ENCODE measurements at regions of chr20 and their contacts with region 1.

Region 1: GRCh38 chr20:52071136-52071535 is 120.4 kb downstream of the ZFP64 start:
- DNase-seq: no peak
- H3K4me3 ChIP-seq: no peak overlapping the region
- H3K27ac ChIP-seq: no peak overlapping the region
- H3K4me1 ChIP-seq: no peaks in the 10 kb centered on the region
- H3K27me3 ChIP-seq: no peaks in the 10 kb centered on the region
- CTCF ChIP-seq: no peak
- POLR2A ChIP-seq: no peak

Region 2: GRCh38 chr20:51608061-51608460 is 463.1 kb before region 1 on chr20:
- intact Hi-C with region 1: loop called (anchors 5 kb)
- DNase-seq: no peak
- H3K4me3 ChIP-seq: no peak overlapping the region
- H3K27ac ChIP-seq: no peak overlapping the region
- H3K4me1 ChIP-seq: no peaks in the 10 kb centered on the region
- H3K27me3 ChIP-seq: no peaks in the 10 kb centered on the region
- CTCF ChIP-seq: no peak
- POLR2A ChIP-seq: no peak

Region 3: GRCh38 chr20:51800060-51800794 is 270.9 kb before region 1 on chr20:
- intact Hi-C with region 1: no loop called
- DNase-seq: no peak
- H3K4me3 ChIP-seq: peak overlapping the region; percentile 25 to 66 (median 45)
- H3K27ac ChIP-seq: no peak overlapping the region
- H3K4me1 ChIP-seq: peaks cover 11 to 28% (median 17%) of the 10 kb centered on the region in 3 donors
- H3K27me3 ChIP-seq: peaks cover 0 to 67% (median 6%) of the 10 kb centered on the region in 4 donors
- CTCF ChIP-seq: peak; percentile 16 to 86 (median 66)
- POLR2A ChIP-seq: no peak

Region 4: GRCh38 chr20:52383995-52384621 is 313.0 kb after region 1 on chr20:
- intact Hi-C with region 1: no loop called
- DNase-seq: no peak
- H3K4me3 ChIP-seq: no peak overlapping the region
- H3K27ac ChIP-seq: no peak overlapping the region
- H3K4me1 ChIP-seq: no peaks in the 10 kb centered on the region
- H3K27me3 ChIP-seq: peaks cover 0 to 4% (median 0%) of the 10 kb centered on the region in 4 donors
- CTCF ChIP-seq: no peak
- POLR2A ChIP-seq: no peak

Region 5: GRCh38 chr20:52438324-52438963 is 367.3 kb after region 1 on chr20:
- intact Hi-C with region 1: no loop called
- DNase-seq: no peak
- H3K4me3 ChIP-seq: no peak overlapping the region
- H3K27ac ChIP-seq: no peak overlapping the region
- H3K4me1 ChIP-seq: no peaks in the 10 kb centered on the region
- H3K27me3 ChIP-seq: peaks cover 0 to 3% (median 0%) of the 10 kb centered on the region in 4 donors
- CTCF ChIP-seq: no peak
- POLR2A ChIP-seq: no peak